Endothelial cell of umbilical vein (primary cell): ENCODE measurements at regions of chr11 and their contacts with region 1.

Region 1: DNA sequence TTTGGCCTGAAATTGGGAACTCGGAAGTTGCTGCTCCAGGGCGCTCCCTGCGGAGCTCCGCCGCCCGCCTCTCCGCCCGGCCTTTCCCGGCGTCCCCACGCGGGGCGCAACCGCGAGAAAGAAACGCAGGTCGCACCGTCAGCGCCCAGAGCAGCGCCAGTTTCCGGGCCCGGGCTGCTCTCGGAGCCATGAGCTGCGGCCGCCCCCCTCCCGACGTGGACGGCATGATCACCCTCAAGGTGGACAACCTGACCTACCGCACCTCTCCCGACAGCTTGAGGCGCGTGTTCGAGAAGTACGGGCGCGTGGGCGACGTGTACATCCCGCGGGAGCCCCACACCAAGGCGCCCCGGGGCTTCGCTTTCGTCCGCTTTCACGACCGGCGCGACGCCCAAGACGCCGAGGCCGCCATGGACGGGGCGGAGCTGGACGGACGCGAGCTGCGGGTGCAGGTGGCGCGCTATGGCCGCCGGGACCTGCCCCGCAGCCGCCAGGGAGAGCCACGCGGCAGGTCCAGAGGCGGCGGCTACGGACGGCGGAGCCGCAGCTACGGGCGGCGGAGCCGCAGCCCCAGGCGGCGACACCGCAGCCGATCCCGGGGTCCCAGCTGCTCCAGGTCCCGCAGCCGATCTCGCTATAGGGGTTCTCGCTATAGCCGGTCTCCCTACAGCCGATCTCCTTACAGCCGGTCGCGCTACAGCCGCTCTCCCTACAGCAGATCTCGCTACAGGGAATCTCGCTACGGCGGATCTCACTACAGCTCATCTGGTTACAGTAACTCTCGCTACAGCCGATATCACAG is 521 bp downstream of the SRSF8 start:
- DNase-seq: peak; percentile 79
- H3K4me3 ChIP-seq: peak overlapping the region; percentile 78 to 98 (median 79)
- H3K27ac ChIP-seq: peak overlapping the region; percentile 62
- H3K4me1 ChIP-seq: peaks cover 19% of the 10 kb centered on the region
- H3K27me3 ChIP-seq: peaks cover 1 to 6% of the 10 kb centered on the region in 2 experiments
- CTCF ChIP-seq: peak; percentile 48 to 77
- POLR2A ChIP-seq: peak; percentile 66

Region 2: GRCh38 chr11:94938095-94939055 is 128.9 kb before region 1 on chr11:
- CTCF ChIA-PET with region 1: no interaction called
- POLR2A ChIA-PET with region 1: no interaction called
- dilution Hi-C with region 1: no loop called
- intact Hi-C with region 1: loop called (anchors 2 kb)
- DNase-seq: peak; percentile 90
- H3K4me3 ChIP-seq: no peak overlapping the region
- H3K27ac ChIP-seq: peak overlapping the region; percentile 37
- H3K4me1 ChIP-seq: peaks cover 41% of the 10 kb centered on the region
- H3K27me3 ChIP-seq: no peaks in the 10 kb centered on the region
- CTCF ChIP-seq: no peak
- POLR2A ChIP-seq: no peak

Region 3: DNA sequence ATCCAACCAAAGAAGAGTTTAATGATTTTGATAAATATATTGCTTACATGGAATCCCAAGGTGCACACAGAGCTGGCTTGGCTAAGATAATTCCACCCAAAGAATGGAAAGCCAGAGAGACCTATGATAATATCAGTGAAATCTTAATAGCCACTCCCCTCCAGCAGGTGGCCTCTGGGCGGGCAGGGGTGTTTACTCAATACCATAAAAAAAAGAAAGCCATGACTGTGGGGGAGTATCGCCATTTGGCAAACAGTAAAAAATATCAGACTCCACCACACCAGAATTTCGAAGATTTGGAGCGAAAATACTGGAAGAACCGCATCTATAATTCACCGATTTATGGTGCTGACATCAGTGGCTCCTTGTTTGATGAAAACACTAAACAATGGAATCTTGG is 69.8 kb before region 1 on chr11:
- CTCF ChIA-PET with region 1: no interaction called
- POLR2A ChIA-PET with region 1: no interaction called
- dilution Hi-C with region 1: no loop called
- intact Hi-C with region 1: no loop called
- DNase-seq: no peak
- H3K4me3 ChIP-seq: no peak overlapping the region
- H3K27ac ChIP-seq: no peak overlapping the region
- H3K4me1 ChIP-seq: no peaks in the 10 kb centered on the region
- H3K27me3 ChIP-seq: no peaks in the 10 kb centered on the region
- CTCF ChIP-seq: no peak
- POLR2A ChIP-seq: no peak

Region 4: GRCh38 chr11:95089620-95090542 is 22.6 kb after region 1 on chr11 and contains the start of gene ENDOD1:
- CTCF ChIA-PET with region 1: interaction called, 91 read pairs
- POLR2A ChIA-PET with region 1: interaction called, 5 read pairs
- dilution Hi-C with region 1: no loop called
- intact Hi-C with region 1: loop called (anchors 1 kb)
- DNase-seq: peak; percentile 87
- H3K4me3 ChIP-seq: peak within 1 kb of the TSS; percentile 31 to 81 (median 67)
- H3K27ac ChIP-seq: peak within 1 kb of the TSS; percentile 39
- H3K4me1 ChIP-seq: peaks cover 10% of the 10 kb centered on the region
- H3K27me3 ChIP-seq: no peaks in the 10 kb centered on the region
- CTCF ChIP-seq: peak in 1 of 2 donors; percentile 5
- POLR2A ChIP-seq: peak; percentile 17
- total RNA-seq, gene ENDOD1: 17.1 and 20.5 TPM in 2 replicates

Region 5: DNA sequence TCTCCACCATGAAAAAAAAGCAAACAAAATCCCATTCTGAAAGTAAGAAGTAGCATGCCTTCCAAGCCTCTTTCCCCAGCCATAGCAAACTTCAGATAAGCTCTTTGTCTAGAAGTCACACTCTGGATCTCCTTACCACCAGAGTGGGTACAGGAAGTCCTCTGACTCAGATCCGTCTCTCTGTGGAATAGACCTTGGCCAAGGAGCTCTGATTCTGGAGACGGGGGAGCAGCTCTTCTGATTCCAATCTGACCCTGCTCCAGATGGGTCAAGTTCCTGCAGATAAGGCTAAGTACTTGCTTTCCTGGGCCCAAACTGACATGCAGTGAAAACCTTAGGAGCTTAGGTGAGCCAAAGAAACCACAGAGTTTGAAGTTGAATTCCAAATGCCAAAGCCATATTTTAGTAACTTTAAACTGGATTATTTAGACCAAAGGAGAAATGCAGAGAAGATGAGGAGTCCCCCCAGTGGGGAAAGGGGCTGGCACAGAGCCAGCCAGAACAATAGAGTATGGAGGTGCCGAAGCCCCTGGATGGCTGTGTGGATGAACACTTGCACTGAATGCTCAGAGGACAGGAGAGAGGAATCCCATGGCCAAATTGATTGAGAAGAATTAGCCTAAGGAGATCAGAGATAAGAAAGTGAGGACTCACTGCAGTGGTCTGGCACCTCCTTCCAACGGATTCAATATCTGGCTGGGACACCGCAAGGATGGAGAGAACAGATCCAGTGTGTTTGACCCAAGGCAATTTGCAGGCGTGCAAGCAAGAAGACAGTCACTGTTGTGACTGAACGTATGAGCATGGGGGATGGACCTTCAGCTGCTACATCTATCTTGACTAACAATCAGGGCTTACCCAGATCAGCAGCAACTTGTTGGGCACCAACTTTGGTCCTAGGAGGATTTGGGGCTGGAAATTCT is 77.3 kb after region 1 on chr11:
- CTCF ChIA-PET with region 1: interaction called, 96 read pairs
- POLR2A ChIA-PET with region 1: interaction called, 9 read pairs
- dilution Hi-C with region 1: no loop called
- intact Hi-C with region 1: no loop called
- DNase-seq: peak; percentile 42
- H3K4me3 ChIP-seq: no peak overlapping the region
- H3K27ac ChIP-seq: no peak overlapping the region
- H3K4me1 ChIP-seq: peaks cover 38% of the 10 kb centered on the region
- H3K27me3 ChIP-seq: no peaks in the 10 kb centered on the region
- CTCF ChIP-seq: no peak
- POLR2A ChIP-seq: no peak

Region 6: GRCh38 chr11:95705485-95706124 is 638.4 kb after region 1 on chr11:
- CTCF ChIA-PET with region 1: interaction called, 30 read pairs
- POLR2A ChIA-PET with region 1: no interaction called
- dilution Hi-C with region 1: no loop called
- intact Hi-C with region 1: loop called (anchors 1 kb)
- DNase-seq: peak; percentile 87
- H3K4me3 ChIP-seq: no peak overlapping the region
- H3K27ac ChIP-seq: no peak overlapping the region
- H3K4me1 ChIP-seq: no peaks in the 10 kb centered on the region
- H3K27me3 ChIP-seq: peaks cover 13 to 17% of the 10 kb centered on the region in 2 experiments
- CTCF ChIP-seq: peak; percentile 83 to 93
- POLR2A ChIP-seq: no peak

Region 7: DNA sequence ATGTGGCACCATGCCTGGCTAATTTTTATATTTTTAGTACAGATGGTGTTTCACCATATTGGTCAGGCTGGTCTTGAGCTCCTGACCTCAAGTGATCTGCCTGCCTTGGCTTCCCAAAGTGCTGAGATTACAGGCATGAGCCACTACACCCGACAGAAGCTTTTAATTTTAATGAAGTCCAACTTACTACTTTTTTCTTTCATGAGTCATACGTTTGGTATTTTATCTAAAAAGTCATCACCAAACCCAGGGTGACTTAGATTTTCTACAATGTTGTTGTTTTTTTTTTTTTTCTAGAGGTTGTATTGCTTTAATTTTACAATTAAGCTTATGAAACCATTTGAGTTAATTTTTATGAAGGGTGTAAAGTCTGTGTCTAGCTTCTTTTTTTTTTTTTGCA is 1357.5 kb after region 1 on chr11:
- CTCF ChIA-PET with region 1: interaction called, 6 read pairs
- POLR2A ChIA-PET with region 1: no interaction called
- dilution Hi-C with region 1: no loop called
- intact Hi-C with region 1: loop called (anchors 1 kb)
- DNase-seq: peak; percentile 51
- H3K4me3 ChIP-seq: no peak overlapping the region
- H3K27ac ChIP-seq: no peak overlapping the region
- H3K4me1 ChIP-seq: peaks cover 2% of the 10 kb centered on the region
- H3K27me3 ChIP-seq: peaks cover 0 to 17% of the 10 kb centered on the region in 2 experiments
- CTCF ChIP-seq: no peak
- POLR2A ChIP-seq: no peak